Tibial artery (tissue), 4 donors: ENCODE measurements at regions of chr5 and their contacts with region 1.

Region 1: GRCh38 chr5:92734211-92734940 is 846.6 kb downstream of the NR2F1-AS1 start:
- DNase-seq: no peak
- H3K4me3 ChIP-seq: no peak overlapping the region
- H3K27ac ChIP-seq: no peak overlapping the region
- H3K4me1 ChIP-seq: no peaks in the 10 kb centered on the region
- H3K27me3 ChIP-seq: no peaks in the 10 kb centered on the region
- CTCF ChIP-seq: no peak

Region 2: DNA sequence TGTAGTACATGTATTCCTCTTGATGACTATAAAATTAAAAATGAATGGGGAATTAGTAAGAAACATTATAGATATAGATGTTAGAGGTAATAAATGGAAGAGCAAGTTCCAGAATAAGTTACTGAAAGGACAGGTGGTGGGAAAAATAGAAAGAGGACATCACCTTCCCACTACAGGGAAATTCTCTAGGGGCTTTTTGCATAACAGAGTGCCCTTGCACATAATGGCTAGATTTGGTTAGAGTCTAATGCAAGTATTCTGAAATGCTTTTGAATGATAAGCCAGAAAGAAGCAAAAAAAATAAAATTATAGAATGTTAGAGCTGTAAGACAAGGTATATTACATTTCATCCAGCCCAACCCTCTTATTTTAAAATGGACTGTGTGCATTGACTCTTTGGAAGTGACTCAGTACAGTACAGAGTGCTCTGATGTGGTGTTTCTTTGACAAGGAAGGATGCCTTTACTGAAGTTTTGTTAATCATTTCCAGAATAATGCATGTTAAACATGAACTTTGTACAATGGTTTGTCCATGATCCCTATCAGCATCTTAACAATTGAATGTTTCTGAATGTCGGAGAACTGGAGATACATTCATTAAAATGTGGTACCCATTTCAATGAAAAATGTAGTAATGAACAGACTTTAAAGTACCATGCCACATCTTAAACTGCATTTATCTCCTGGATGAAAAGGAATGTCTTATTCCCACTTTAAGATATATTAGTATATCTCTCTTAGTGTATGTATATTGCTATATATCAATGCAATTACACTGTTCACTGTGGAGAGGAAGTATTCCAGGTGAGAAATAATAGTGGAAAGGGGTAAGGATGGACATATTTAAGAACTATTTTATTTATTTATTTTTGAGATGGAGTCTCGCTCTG is 1784.7 kb before region 1 on chr5:
- intact Hi-C with region 1: loop called (anchors 5 kb)
- DNase-seq: no peak
- H3K4me3 ChIP-seq: no peak overlapping the region
- H3K27ac ChIP-seq: no peak overlapping the region
- H3K4me1 ChIP-seq: no peaks in the 10 kb centered on the region
- H3K27me3 ChIP-seq: no peaks in the 10 kb centered on the region
- CTCF ChIP-seq: no peak

Region 3: GRCh38 chr5:94522099-94522498 is 1787.7 kb after region 1 on chr5:
- intact Hi-C with region 1: no loop called
- DNase-seq: no peak
- H3K4me3 ChIP-seq: no peak overlapping the region
- H3K27ac ChIP-seq: no peak overlapping the region
- H3K4me1 ChIP-seq: no peaks in the 10 kb centered on the region
- H3K27me3 ChIP-seq: no peaks in the 10 kb centered on the region
- CTCF ChIP-seq: no peak